ENCODE measurements at regions of chr3 and their contacts with region 1.

Region 1: DNA sequence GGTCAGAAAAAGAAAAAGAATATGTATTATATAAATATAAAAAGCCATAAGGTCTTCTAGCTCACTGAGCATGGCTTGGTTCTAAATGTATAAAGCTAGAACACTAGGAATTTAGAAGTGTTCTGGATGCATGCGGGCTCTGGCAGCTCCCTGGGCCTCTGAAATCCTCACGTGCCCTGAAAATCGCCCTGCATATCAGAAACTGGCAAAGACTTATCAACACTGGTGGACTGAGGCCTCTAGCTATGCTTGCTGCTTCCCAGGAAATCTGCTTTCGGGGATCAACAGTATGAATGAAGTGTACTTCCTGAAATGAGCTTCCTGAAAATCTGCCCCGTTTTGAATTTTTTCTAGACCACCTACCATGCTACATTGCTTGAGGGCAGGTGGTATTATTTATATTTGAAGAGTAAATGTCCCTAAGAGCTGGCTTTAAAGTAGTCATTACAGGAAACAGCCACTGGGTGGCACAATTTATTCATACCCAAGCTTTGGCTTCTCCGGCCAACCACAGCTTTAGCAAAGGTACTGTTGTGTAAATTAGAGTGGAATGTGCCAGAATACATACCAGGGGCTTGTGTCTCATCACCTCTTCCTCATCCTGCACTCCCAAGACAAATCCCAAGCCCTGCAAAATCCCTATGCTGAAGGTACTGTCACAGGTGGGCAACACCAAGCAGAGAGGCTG is 17.7 kb downstream of the CRTAP start:
- DNase-seq: no peak
- ATAC-seq: peak; percentile 86 to 87
- H3K4me3 ChIP-seq: no peak overlapping the region
- H3K27ac ChIP-seq: no peak overlapping the region
- H3K4me1 ChIP-seq: no peaks in the 10 kb centered on the region
- H3K27me3 ChIP-seq: no peaks in the 10 kb centered on the region
- CTCF ChIP-seq: peak; percentile 76

Region 2: GRCh38 chr3:33372218-33373081 is 241.0 kb after region 1 on chr3:
- intact Hi-C with region 1: loop called (anchors 10 kb)
- DNase-seq: no peak
- ATAC-seq: peak; percentile 74 to 75
- H3K4me3 ChIP-seq: no peak overlapping the region
- H3K27ac ChIP-seq: no peak overlapping the region
- H3K4me1 ChIP-seq: peaks cover 7% of the 10 kb centered on the region
- H3K27me3 ChIP-seq: no peaks in the 10 kb centered on the region
- CTCF ChIP-seq: peak; percentile 87